Activated naive CD4-positive, alpha-beta T cell treated with anti-CD3 and anti-CD28 coated beads for 36 hours (primary cell): ENCODE measurements at regions of chr1 and their contacts with region 1.

Region 1: DNA sequence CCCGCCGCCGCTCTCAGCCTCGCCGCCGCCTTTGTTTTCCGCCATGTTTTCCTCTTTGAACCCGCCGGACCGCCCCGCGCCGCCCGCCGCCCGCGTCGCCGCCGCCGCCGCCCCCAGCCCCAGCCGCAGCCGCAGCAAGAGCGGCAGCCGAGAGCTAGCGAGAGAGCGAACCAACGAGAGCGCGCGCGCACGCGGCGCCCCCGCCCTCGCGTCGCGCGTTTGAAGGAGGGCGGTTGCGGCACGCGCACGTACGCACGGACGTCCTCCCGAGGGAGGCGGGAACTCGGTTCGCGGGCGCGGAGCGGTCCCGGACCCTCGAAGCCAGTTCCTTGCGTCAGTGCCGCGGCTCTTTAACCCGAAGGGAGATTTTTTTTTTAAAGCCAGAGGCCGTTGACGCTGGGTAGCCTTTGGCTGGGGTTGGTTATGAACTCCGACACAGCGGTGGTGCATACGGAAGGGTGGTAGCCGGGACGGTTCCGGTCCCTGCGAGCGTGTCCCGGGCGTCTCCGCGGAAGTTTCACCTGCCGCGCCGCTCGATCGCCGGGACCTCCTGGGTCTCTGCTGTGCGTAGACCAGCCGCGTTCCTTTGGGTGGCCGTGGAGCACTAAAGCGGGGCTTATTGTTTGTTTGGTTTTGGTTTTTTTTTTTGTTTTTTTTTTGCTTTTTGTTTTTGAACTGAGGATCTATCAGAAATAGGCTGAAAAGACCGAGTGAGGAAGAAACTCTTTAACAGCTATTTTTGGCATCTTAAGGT is at the start of gene TRIM33:
- DNase-seq: peak; percentile 92
- H3K4me3 Mint-ChIP-seq: peak within 1 kb of the TSS; percentile 90
- H3K27ac Mint-ChIP-seq: peak within 1 kb of the TSS; percentile 99
- H3K4me1 Mint-ChIP-seq: peaks cover 48% of the 10 kb centered on the region
- H3K27me3 Mint-ChIP-seq: no peaks in the 10 kb centered on the region
- total RNA-seq, gene TRIM33: 23.1 to 25.0 TPM

Region 2: DNA sequence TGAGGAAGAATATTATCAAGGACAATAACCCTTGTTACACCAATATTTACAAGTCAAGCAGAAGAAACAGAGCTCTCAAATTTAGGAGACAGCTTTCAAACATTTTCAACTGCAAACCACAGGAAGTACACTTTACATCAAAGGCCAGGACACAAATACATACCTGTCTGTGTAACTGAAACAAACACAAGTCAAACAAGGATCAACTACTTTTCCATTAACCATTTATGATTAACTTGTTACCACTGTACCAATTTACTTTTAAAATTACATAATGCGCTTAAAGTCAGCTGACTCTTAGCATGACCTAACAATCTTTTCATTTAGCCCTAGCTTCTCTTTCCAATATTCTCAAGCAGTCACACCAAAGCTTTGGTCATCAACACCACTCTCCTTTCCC is 43.7 kb before region 1 on chr1:
- CTCF ChIA-PET with region 1: no interaction called
- intact Hi-C with region 1: loop called (anchors 1 kb)
- DNase-seq: no peak
- H3K4me3 Mint-ChIP-seq: no peak overlapping the region
- H3K27ac Mint-ChIP-seq: no peak overlapping the region
- H3K4me1 Mint-ChIP-seq: peaks cover 45% of the 10 kb centered on the region
- H3K27me3 Mint-ChIP-seq: no peaks in the 10 kb centered on the region

Region 3: DNA sequence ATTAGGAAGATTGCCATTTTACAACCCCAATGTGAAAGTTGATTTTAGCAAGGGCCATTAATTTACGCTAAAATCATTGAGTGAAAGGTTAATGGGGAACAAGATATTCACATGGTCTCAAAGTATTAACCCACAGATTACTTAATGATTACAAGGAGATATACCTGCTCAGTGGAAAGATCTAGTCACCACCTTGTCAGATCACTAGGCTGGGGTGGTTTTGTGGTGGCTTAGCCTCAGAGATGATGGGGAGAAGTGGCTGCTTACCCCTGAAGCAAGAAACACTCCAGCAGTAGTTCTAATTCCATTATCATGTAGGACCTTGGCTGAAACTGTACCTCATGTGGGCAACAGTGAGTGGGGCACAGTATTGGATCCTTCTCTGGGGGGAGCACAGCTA is 19.9 kb after region 1 on chr1:
- CTCF ChIA-PET with region 1: no interaction called
- intact Hi-C with region 1: no loop called
- DNase-seq: no peak
- H3K4me3 Mint-ChIP-seq: no peak overlapping the region
- H3K27ac Mint-ChIP-seq: no peak overlapping the region
- H3K4me1 Mint-ChIP-seq: no peaks in the 10 kb centered on the region
- H3K27me3 Mint-ChIP-seq: no peaks in the 10 kb centered on the region

Region 4: GRCh38 chr1:114558544-114558943 is 47.3 kb after region 1 on chr1:
- CTCF ChIA-PET with region 1: interaction called, 3 read pairs
- intact Hi-C with region 1: loop called (anchors 2 kb)
- DNase-seq: no peak
- H3K4me3 Mint-ChIP-seq: no peak overlapping the region
- H3K27ac Mint-ChIP-seq: no peak overlapping the region
- H3K4me1 Mint-ChIP-seq: no peaks in the 10 kb centered on the region
- H3K27me3 Mint-ChIP-seq: no peaks in the 10 kb centered on the region

Region 5: GRCh38 chr1:114670083-114671010 is 159.1 kb after region 1 on chr1:
- CTCF ChIA-PET with region 1: no interaction called
- intact Hi-C with region 1: loop called (anchors 2 kb)
- DNase-seq: peak; percentile 87
- H3K4me3 Mint-ChIP-seq: peak overlapping the region; percentile 87
- H3K27ac Mint-ChIP-seq: no peak overlapping the region
- H3K4me1 Mint-ChIP-seq: peaks cover 4% of the 10 kb centered on the region
- H3K27me3 Mint-ChIP-seq: peaks cover 1% of the 10 kb centered on the region

Region 6: DNA sequence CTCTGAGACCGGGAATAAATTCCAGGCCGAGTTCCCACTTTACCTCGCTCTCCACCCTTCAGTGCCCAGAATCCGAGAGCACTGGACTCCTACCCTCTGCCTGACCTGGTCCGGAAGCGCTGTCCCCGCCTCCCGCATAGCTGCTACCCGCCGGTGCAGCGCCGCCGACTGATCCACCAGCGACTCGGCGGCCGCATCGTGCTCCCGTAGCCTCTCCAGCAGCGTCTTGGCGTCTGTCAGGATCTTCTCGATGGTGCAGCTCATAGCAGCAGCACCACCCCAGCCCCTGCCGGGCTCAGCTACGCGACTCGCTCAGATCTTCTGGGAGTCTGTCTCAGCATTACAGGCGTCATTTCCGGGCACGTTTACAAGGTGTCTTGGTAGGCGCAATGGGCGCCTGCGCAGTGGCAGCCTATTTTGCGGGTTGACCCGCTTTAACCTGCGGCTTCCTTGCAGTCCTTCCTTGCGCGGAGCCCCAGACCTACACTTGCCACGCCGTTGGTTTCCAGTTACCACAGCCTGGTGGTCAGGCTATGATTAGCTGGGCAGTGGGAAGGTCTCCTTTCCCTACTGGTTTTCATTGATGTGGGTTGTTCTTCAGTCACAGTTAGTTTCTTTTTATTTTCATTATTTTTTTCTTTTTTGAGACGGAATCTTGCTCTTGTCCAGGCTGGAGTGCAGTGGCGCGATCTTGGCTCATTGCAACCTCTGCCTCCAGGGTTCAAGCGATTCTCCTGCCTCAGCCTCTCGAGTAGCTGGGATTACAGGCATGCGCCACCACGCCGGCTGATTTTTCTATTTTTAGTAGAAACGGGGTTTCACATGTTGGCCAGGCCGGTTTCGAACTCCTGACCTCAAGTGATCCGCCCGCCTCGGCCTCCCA is 269.4 kb after region 1 on chr1 and contains the start of gene SIKE1:
- CTCF ChIA-PET with region 1: no interaction called
- intact Hi-C with region 1: loop called (anchors 1 kb)
- DNase-seq: peak; percentile 97
- H3K4me3 Mint-ChIP-seq: peak within 1 kb of the TSS; percentile 100
- H3K27ac Mint-ChIP-seq: peak within 1 kb of the TSS; percentile 97
- H3K4me1 Mint-ChIP-seq: peaks cover 24% of the 10 kb centered on the region
- H3K27me3 Mint-ChIP-seq: no peaks in the 10 kb centered on the region
- total RNA-seq, gene SIKE1: 60.2 to 60.6 TPM